ENCODE measurements at regions of chr21 and their contacts with region 1.

Region 1: DNA sequence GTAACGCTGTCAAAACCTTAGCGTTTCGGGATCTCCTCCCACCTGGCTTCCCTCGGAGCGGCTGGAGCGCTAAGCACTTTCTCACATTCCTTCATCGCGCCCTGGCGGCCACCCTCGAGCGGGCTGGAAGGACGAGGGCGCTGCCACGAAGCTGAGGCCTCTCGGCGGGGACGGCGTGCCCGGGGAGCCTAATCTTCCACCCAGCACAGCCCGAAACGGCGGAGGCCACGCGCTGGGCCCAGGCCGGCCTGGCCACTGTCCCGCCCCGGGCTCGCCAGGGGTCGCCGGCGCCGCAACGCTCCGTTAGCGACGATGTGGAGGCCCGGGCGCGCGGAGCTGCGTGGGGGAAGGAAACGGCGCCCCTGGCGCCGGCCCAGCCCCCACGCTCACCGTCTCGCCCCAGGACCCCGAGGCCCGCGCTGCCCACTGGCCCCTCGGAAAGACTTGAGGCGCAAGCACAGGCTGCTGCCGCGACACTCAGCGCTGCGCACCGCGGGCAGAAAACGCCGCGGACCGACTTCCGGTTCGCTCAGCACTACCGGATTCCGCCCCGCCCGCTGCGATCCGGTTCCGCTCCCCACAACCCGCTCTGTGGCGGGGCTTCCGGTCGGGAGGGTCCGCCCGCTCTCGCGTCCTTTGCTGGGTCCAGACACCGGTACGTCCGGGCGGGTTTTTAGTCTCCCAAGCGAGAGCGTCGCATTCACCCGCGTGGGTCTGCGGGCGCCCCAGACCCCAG is at the start of gene YBEY:
- DNase-seq: peak; percentile 59
- ATAC-seq: peak; percentile 96
- H3K4me3 ChIP-seq: peak within 1 kb of the TSS; percentile 97
- H3K27ac ChIP-seq: peak within 1 kb of the TSS; percentile 80
- H3K4me1 ChIP-seq: peaks cover 13% of the 10 kb centered on the region
- H3K27me3 ChIP-seq: no peaks in the 10 kb centered on the region
- CTCF ChIP-seq: peak; percentile 35 to 64 (median 35); a peak in 5 of 6 replicates
- EP300 ChIP-seq: no peak
- POLR2A ChIP-seq: peak; percentile 91
- RAD21 ChIP-seq: peak; percentile 35; the same call in 1 of the 2 replicates
- polyA plus RNA-seq, gene YBEY: 6.5 to 11.3 TPM

Region 2: DNA sequence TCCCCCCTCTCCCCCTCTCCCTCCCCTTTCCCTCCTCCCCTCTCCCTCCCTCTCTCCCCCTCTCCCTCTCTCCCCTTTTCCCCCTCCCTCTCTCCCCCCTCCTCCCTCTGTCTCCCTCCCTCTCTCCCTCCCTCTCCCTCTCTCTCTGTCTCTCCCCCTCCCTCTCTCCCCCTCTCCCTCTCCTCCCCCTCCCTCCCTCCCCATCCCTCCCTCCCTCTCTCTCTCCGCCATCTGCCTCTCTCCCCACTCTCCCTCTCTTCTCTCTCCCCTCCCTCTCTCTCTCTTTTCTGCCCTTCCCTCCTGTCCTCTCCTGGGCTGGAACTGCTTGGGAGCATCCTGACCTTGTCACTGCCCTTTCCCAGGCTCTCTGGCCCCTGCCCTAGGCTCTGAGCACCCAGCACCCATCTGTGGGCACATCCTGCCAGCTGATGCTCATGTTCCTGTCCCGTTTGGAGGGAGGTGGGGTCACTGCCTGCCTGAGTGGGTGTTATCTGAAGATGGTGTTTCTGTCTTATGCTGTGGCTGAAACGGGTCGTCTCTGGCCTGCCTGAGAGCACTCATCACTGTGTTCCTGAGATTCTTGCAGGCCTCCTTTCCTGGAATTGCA is 141.4 kb before region 1 on chr21:
- CTCF ChIA-PET with region 1: interaction called, 29 read pairs
- POLR2A ChIA-PET with region 1: no interaction called
- RAD21 ChIA-PET with region 1: interaction called, 10 read pairs
- SMC1A ChIA-PET with region 1: interaction called, 15 read pairs
- in situ Hi-C with region 1: no loop called
- intact Hi-C with region 1: loop called (anchors 10 kb)
- DNase-seq: no peak
- ATAC-seq: no peak
- H3K4me3 ChIP-seq: no peak overlapping the region
- H3K27ac ChIP-seq: no peak overlapping the region
- H3K4me1 ChIP-seq: no peaks in the 10 kb centered on the region; the same call in 1 of the 2 replicates
- H3K27me3 ChIP-seq: no peaks in the 10 kb centered on the region
- CTCF ChIP-seq: no peak
- EP300 ChIP-seq: no peak
- POLR2A ChIP-seq: no peak
- RAD21 ChIP-seq: no peak

Region 3: DNA sequence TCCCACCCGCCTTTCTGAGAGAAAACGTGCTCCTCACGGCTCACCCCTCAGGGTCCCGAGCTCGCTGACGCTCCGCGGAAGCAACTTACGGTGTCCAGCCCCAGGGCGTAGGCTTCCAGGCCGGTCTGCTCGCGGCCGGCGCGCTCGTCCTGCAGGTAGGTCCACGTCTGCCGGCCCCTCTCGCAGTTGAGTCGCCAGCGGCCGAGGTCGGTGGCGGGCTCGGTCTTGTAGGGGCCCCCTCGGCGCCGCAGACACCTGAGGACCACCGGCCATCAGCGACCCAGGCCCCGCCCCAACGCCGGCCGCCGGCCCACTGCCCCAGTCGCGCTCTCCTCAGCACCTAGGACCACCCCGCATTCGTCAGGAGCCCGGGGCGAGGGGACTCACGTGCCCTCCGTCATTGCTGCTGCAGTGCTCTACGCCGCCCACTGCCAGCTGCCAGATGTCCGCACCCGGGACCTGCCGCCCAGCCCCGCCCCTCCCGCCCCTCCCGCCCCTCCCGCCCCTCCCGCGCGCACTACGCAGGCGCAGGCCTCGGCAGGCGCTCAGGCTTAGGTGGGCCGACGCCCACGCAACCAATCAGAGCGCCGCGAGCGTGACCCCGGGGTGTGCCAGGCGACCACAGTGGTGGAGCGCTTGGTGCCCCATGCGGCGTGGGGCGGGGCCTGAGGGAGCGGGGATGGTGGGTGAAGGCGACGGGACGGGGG is 57.4 kb before region 1 on chr21 and contains the start of gene LSS:
- CTCF ChIA-PET with region 1: interaction called, 18 read pairs
- POLR2A ChIA-PET with region 1: interaction called, 3 read pairs
- RAD21 ChIA-PET with region 1: interaction called, 7 read pairs
- SMC1A ChIA-PET with region 1: interaction called, 5 read pairs
- in situ Hi-C with region 1: no loop called
- intact Hi-C with region 1: loop called (anchors 5 kb)
- DNase-seq: peak; percentile 83
- ATAC-seq: peak; percentile 90
- H3K4me3 ChIP-seq: peak within 1 kb of the TSS; percentile 81
- H3K27ac ChIP-seq: peak within 1 kb of the TSS; percentile 73
- H3K4me1 ChIP-seq: peaks cover 5% of the 10 kb centered on the region; the same call in 1 of the 2 replicates
- H3K27me3 ChIP-seq: no peaks in the 10 kb centered on the region
- CTCF ChIP-seq: no peak
- EP300 ChIP-seq: no peak
- POLR2A ChIP-seq: peak; percentile 80
- RAD21 ChIP-seq: no peak
- polyA plus RNA-seq, gene LSS: 2.9 to 3.7 TPM

Region 4: GRCh38 chr21:46253610-46254124 is 32.3 kb before region 1 on chr21:
- CTCF ChIA-PET with region 1: interaction called, 17 read pairs
- POLR2A ChIA-PET with region 1: interaction called, 3 read pairs
- RAD21 ChIA-PET with region 1: interaction called, 8 read pairs
- SMC1A ChIA-PET with region 1: interaction called, 5 read pairs
- in situ Hi-C with region 1: no loop called
- intact Hi-C with region 1: loop called (anchors 2 kb)
- DNase-seq: peak; percentile 89
- ATAC-seq: peak; percentile 93
- H3K4me3 ChIP-seq: no peak overlapping the region
- H3K27ac ChIP-seq: peak overlapping the region; percentile 55
- H3K4me1 ChIP-seq: peaks cover 15% of the 10 kb centered on the region
- H3K27me3 ChIP-seq: no peaks in the 10 kb centered on the region
- CTCF ChIP-seq: no peak
- EP300 ChIP-seq: no peak
- POLR2A ChIP-seq: no peak
- RAD21 ChIP-seq: no peak

Region 5: DNA sequence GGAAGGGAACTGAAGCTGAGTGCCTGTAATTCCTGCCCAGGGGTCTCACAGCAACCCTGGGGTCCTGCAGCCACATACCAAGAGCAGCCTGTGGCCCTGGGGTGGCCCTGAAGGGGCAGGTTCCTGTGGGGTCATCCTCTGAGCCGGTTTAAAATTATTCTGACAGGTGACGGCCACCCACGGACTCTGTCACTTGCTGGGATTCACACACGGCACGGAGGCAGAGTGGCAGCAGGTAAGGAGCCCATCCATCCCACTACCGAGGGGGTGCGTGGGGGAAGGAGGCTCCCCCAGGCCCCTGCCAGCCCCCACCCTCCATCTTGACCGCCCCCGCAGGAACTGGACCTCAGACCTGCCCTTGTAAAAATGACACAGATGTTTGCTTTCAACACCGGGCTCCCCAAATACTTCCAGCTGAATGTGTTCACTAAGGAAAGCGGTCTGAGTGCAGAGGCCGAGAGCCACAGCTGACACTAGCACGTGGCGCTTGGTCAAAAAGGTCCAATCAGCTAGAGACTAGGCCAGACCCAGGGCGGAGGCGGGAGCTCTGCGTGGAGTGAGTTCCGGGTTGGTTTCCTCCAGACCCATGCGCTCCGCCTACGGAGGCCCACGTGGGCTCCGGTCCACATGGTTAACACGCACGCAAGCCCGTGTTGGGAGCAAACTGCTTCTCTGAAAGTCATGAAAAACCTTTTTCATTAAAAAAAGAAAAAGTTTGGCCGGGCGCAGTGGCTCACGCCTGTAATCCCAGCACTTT is 10.2 kb after region 1 on chr21:
- CTCF ChIA-PET with region 1: no interaction called
- POLR2A ChIA-PET with region 1: no interaction called
- RAD21 ChIA-PET with region 1: no interaction called
- SMC1A ChIA-PET with region 1: no interaction called
- in situ Hi-C with region 1: no loop called
- intact Hi-C with region 1: no loop called
- DNase-seq: no peak
- ATAC-seq: no peak
- H3K4me3 ChIP-seq: no peak overlapping the region
- H3K27ac ChIP-seq: no peak overlapping the region
- H3K4me1 ChIP-seq: peaks cover 6% of the 10 kb centered on the region
- H3K27me3 ChIP-seq: no peaks in the 10 kb centered on the region
- CTCF ChIP-seq: no peak
- EP300 ChIP-seq: no peak
- POLR2A ChIP-seq: no peak
- RAD21 ChIP-seq: no peak

Region 6: GRCh38 chr21:46356494-46357334 is 70.8 kb after region 1 on chr21:
- CTCF ChIA-PET with region 1: no interaction called
- POLR2A ChIA-PET with region 1: no interaction called
- RAD21 ChIA-PET with region 1: no interaction called
- SMC1A ChIA-PET with region 1: no interaction called
- in situ Hi-C with region 1: no loop called
- intact Hi-C with region 1: no loop called
- DNase-seq: no peak
- ATAC-seq: no peak
- H3K4me3 ChIP-seq: no peak overlapping the region
- H3K27ac ChIP-seq: no peak overlapping the region
- H3K4me1 ChIP-seq: peaks cover 3% of the 10 kb centered on the region; the same call in 1 of the 2 replicates
- H3K27me3 ChIP-seq: no peaks in the 10 kb centered on the region
- CTCF ChIP-seq: no peak
- EP300 ChIP-seq: no peak
- POLR2A ChIP-seq: no peak
- RAD21 ChIP-seq: no peak

Region 7: DNA sequence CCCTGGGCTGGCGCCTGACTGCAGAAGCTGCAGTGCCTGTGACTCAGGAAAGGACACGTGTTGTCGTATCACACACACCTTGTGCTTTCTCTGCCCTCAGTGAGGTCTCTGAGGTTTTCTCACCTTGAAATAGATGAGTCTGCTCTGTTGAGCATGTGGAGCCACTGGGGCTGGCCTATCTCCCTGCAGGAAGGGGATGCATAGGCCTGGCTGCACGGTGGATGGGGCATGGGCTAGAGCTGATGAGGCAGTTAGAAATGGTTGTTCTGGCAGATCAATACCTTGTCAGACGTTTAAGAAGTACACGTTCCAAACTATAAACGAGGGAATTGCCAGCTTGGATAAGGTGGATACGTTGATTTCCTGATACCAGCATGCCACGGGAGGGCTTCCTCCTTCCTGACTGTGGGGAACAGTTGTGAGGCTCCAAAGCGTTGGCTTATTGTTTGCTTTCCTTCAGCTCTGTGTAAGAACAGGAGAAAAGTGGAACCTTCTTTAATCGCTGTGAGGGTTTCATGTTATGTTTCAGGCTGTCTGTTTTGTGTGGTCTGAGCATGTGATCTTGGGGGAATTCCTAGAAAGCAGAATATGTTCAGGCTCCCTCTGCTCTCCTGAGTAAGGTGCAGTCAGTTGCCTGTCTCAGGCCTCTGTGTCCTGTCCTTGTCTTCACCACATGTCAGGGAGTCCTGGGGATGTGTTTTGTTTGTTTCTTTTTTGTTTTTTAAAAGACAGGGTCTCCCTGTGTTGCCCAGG is 82.8 kb after region 1 on chr21:
- CTCF ChIA-PET with region 1: interaction called, 3 read pairs
- POLR2A ChIA-PET with region 1: interaction called, 3 read pairs
- RAD21 ChIA-PET with region 1: no interaction called
- SMC1A ChIA-PET with region 1: interaction called, 10 read pairs
- in situ Hi-C with region 1: no loop called
- intact Hi-C with region 1: no loop called
- DNase-seq: peak; percentile 65
- ATAC-seq: peak; percentile 91
- H3K4me3 ChIP-seq: peak overlapping the region; percentile 39; the same call in 1 of the 2 replicates
- H3K27ac ChIP-seq: peak overlapping the region; percentile 88
- H3K4me1 ChIP-seq: peaks cover 31% of the 10 kb centered on the region
- H3K27me3 ChIP-seq: no peaks in the 10 kb centered on the region
- CTCF ChIP-seq: no peak
- EP300 ChIP-seq: peak in 1 of 2 experiments; percentile 47; a peak in 2 of 4 replicates
- POLR2A ChIP-seq: peak; percentile 65
- RAD21 ChIP-seq: no peak

Measured in GM12878 (cell line).